ENCODE measurements at regions of chr5 and their contacts with region 1.

Region 1: DNA sequence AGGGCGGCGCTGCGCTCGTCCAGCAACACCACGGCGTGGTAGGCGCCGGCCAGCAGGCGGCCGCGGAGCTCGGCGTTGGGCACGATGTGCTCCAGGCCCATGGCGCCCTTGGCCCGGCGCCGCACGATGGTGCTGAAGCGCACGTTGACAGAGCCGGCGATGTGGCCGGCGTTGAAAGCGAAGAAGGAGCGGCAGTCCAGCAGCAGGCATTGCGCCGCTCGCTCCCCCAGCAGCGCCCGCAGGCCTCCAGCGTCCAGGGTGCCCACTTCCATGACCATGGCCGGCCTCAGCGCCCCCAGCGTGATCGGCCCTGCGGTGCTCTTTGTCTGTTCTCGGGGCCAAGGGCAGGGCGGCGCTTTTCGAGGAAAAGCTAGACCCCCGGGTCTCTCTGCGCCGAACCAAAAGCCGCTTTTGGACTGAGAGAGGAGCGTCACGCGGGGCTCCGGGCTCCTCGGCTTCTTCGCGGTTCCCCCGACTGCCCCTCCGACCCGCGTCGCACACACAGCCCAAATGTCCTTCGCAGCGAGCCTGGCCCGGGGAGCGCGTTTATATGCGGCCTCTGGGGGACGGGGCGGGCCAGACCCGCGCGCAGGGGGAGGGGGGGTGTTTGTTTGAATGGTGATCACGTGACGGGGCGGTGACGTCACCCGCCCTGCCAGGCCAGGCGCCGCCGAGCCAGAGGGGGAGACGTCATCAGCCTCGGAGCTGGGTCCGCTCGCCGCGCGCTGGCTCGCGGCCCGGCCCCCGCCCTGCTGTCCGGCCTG is at the start of gene DUSP1:
- DNase-seq: peak; percentile 99
- H3K4me3 Mint-ChIP-seq: peak within 1 kb of the TSS; percentile 98
- H3K27ac Mint-ChIP-seq: peak within 1 kb of the TSS; percentile 99
- H3K4me1 Mint-ChIP-seq: peaks cover 50% of the 10 kb centered on the region
- H3K27me3 Mint-ChIP-seq: no peaks in the 10 kb centered on the region
- CTCF ChIP-seq: peak; percentile 30
- total RNA-seq, gene DUSP1: 594 and 611 TPM in 2 replicates

Region 2: GRCh38 chr5:172216345-172216744 is 554.5 kb before region 1 on chr5:
- CTCF ChIA-PET with region 1: no interaction called
- POLR2A ChIA-PET with region 1: no interaction called
- intact Hi-C with region 1: no loop called
- DNase-seq: peak; percentile 31
- H3K4me3 Mint-ChIP-seq: no peak overlapping the region
- H3K27ac Mint-ChIP-seq: no peak overlapping the region
- H3K4me1 Mint-ChIP-seq: peaks cover 9% of the 10 kb centered on the region
- H3K27me3 Mint-ChIP-seq: no peaks in the 10 kb centered on the region
- CTCF ChIP-seq: no peak

Region 3: DNA sequence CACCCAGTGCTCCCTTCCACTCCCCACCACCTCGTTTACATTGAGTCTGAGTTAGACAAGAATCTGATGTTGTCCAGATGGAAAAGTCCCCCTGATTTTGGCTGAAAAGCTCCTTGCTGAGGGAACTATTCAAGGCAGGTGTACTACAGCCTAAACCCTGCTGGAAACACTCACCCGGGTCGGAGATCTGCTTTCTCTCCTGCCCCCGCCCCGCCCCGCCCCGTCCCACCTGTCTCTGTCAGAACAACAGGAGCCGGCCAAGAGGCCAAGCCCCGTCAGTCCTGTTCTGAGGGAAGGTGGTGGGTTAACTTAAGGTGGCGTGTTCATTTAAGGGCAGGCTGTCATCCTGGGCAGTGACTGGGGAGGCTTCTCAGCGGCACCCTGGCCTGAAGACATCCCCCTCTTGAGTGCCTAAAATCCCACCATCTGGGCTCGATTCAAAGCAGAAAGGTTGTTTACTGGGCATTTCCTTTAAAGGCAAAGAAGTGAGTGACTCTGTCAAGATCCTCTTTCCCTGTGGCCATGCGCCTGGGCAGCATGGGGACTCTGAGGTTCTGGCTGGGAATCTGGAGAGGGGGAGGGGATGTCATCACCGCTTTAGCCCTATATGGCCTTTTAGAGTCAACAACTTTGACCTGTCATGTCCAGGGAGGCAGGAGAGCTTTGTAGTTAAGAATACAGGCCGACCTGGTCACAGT is 200.8 kb before region 1 on chr5:
- CTCF ChIA-PET with region 1: no interaction called
- POLR2A ChIA-PET with region 1: no interaction called
- intact Hi-C with region 1: no loop called
- DNase-seq: no peak
- H3K4me3 Mint-ChIP-seq: no peak overlapping the region
- H3K27ac Mint-ChIP-seq: no peak overlapping the region
- H3K4me1 Mint-ChIP-seq: peaks cover 6% of the 10 kb centered on the region
- H3K27me3 Mint-ChIP-seq: peaks cover 39% of the 10 kb centered on the region
- CTCF ChIP-seq: no peak

Region 4: GRCh38 chr5:172740428-172741201 is 30.2 kb before region 1 on chr5:
- CTCF ChIA-PET with region 1: interaction called, 4 read pairs
- POLR2A ChIA-PET with region 1: interaction called, 287 read pairs
- intact Hi-C with region 1: no loop called
- DNase-seq: peak; percentile 91
- H3K4me3 Mint-ChIP-seq: no peak overlapping the region
- H3K27ac Mint-ChIP-seq: peak overlapping the region; percentile 95
- H3K4me1 Mint-ChIP-seq: peaks cover 23% of the 10 kb centered on the region
- H3K27me3 Mint-ChIP-seq: no peaks in the 10 kb centered on the region
- CTCF ChIP-seq: no peak

Region 5: GRCh38 chr5:172806897-172807672 is 36.2 kb after region 1 on chr5:
- CTCF ChIA-PET with region 1: interaction called, 5 read pairs
- POLR2A ChIA-PET with region 1: interaction called, 1,263 read pairs
- intact Hi-C with region 1: no loop called
- DNase-seq: peak; percentile 95
- H3K4me3 Mint-ChIP-seq: peak overlapping the region; percentile 61
- H3K27ac Mint-ChIP-seq: peak overlapping the region; percentile 90
- H3K4me1 Mint-ChIP-seq: peaks cover 23% of the 10 kb centered on the region
- H3K27me3 Mint-ChIP-seq: no peaks in the 10 kb centered on the region
- CTCF ChIP-seq: no peak

Region 6: GRCh38 chr5:172868924-172869591 is 98.2 kb after region 1 on chr5:
- CTCF ChIA-PET with region 1: interaction called, 18 read pairs
- POLR2A ChIA-PET with region 1: interaction called, 520 read pairs
- intact Hi-C with region 1: loop called (anchors 1 kb)
- DNase-seq: peak; percentile 99
- H3K4me3 Mint-ChIP-seq: no peak overlapping the region
- H3K27ac Mint-ChIP-seq: no peak overlapping the region
- H3K4me1 Mint-ChIP-seq: peaks cover 15% of the 10 kb centered on the region
- H3K27me3 Mint-ChIP-seq: no peaks in the 10 kb centered on the region
- CTCF ChIP-seq: no peak

Region 7: GRCh38 chr5:172932313-172933017 is 161.6 kb after region 1 on chr5:
- CTCF ChIA-PET with region 1: interaction called, 83 read pairs
- POLR2A ChIA-PET with region 1: interaction called, 120 read pairs
- intact Hi-C with region 1: loop called (anchors 1 kb)
- DNase-seq: peak; percentile 82
- H3K4me3 Mint-ChIP-seq: peak overlapping the region; percentile 28
- H3K27ac Mint-ChIP-seq: peak overlapping the region; percentile 90
- H3K4me1 Mint-ChIP-seq: peaks cover 28% of the 10 kb centered on the region
- H3K27me3 Mint-ChIP-seq: no peaks in the 10 kb centered on the region
- CTCF ChIP-seq: peak; percentile 100

Region 8: DNA sequence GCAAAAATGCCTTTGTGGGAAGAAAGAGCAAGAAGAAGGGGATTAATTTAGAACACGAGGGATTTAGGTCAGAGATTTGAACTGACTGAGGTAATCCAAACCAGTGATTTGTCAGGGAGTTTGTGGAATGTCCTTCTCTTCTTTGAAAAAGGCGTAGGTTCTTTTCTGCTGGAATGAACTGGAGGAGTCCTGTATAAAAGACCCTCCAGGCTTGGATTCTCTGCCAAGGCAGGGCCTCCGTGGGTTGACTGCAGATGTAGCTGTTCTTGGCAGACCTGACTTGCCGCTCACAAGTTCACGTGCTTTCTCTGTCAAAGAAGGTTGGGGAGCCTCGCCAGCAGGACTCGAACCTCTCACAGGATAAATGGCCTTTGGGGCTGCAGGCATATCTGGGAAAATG is 620.2 kb after region 1 on chr5:
- CTCF ChIA-PET with region 1: no interaction called
- POLR2A ChIA-PET with region 1: no interaction called
- intact Hi-C with region 1: no loop called
- DNase-seq: no peak
- H3K4me3 Mint-ChIP-seq: no peak overlapping the region
- H3K27ac Mint-ChIP-seq: no peak overlapping the region
- H3K4me1 Mint-ChIP-seq: no peaks in the 10 kb centered on the region
- H3K27me3 Mint-ChIP-seq: no peaks in the 10 kb centered on the region
- CTCF ChIP-seq: no peak